ENCODE measurements at regions of chr4 and their contacts with region 1.

Region 1: GRCh38 chr4:54228056-54228527 is 1.0 kb upstream of the PDGFRA start:
- DNase-seq: peak; percentile 91
- H3K4me3 ChIP-seq: peak overlapping the region; percentile 85
- H3K27ac ChIP-seq: peak overlapping the region; percentile 87
- H3K4me1 ChIP-seq: peaks cover 25% of the 10 kb centered on the region
- H3K27me3 ChIP-seq: no peaks in the 10 kb centered on the region

Region 2: GRCh38 chr4:53015681-53016080 is 1212.4 kb before region 1 on chr4:
- in situ Hi-C with region 1: loop called (anchors 10 kb)
- DNase-seq: peak; percentile 70
- H3K4me3 ChIP-seq: no peak overlapping the region
- H3K27ac ChIP-seq: peak overlapping the region; percentile 43
- H3K4me1 ChIP-seq: peaks cover 74% of the 10 kb centered on the region
- H3K27me3 ChIP-seq: no peaks in the 10 kb centered on the region

Region 3: DNA sequence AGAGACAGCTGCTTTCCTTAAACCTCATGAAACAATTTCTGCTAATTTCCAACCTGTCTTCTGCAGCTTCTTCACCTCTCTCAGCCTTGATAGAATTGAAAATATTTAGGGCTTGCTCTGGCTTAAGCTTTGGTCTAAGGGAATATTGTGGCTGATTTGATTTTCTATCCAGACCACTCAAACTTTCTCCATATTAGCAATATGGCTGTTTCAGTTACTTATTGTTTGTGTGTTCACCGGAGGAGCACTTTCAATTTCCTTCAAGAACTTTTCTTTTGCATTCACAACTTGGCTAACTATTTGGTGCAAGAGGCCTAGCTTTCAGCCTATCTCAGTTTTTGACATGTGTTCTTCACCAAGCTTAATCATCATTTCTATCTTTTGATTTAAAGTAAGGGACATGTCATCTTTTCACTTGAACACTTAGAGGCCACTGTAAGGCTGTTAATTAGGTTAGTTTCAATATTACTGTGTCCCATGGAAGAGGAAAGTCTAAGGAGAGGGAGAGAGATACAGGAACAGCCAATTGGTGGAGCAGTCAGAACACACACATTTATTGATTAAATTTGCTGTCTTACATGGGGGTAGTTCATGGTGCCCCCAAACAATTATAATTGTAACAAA is 1152.8 kb before region 1 on chr4:
- in situ Hi-C with region 1: no loop called
- DNase-seq: no peak
- H3K4me3 ChIP-seq: no peak overlapping the region
- H3K27ac ChIP-seq: no peak overlapping the region
- H3K4me1 ChIP-seq: no peaks in the 10 kb centered on the region
- H3K27me3 ChIP-seq: no peaks in the 10 kb centered on the region

Region 4: GRCh38 chr4:53196882-53197771 is 1031.0 kb before region 1 on chr4:
- in situ Hi-C with region 1: loop called (anchors 10 kb)
- DNase-seq: peak; percentile 80
- H3K4me3 ChIP-seq: peak overlapping the region; percentile 65
- H3K27ac ChIP-seq: peak overlapping the region; percentile 37
- H3K4me1 ChIP-seq: peaks cover 62% of the 10 kb centered on the region
- H3K27me3 ChIP-seq: no peaks in the 10 kb centered on the region

Region 5: DNA sequence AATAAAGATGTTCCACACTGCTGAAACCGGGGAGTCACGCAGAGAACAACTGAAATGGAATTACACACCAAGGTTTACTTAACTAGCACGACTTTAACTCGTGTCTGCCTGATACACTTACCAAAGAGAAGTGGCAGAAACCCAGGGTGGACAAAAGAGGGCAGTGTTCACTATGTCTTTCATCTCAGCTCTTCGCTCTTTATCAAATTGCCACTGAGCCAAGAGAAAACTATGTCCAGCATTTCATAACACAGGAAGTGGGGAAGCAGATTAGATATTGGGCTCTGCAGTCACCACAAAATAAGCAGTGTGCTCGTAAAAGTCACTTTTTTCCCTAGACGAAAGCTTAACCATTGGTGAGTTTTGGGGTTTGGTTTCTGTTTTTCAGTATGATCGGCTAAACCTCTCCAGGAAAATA is 319.4 kb before region 1 on chr4:
- in situ Hi-C with region 1: loop called (anchors 10 kb)
- DNase-seq: peak; percentile 89
- H3K4me3 ChIP-seq: peak overlapping the region; percentile 66
- H3K27ac ChIP-seq: peak overlapping the region; percentile 66
- H3K4me1 ChIP-seq: peaks cover 49% of the 10 kb centered on the region
- H3K27me3 ChIP-seq: no peaks in the 10 kb centered on the region

Region 6: GRCh38 chr4:54482529-54483200 is 254.6 kb after region 1 on chr4:
- in situ Hi-C with region 1: no loop called
- DNase-seq: peak; percentile 66
- H3K4me3 ChIP-seq: no peak overlapping the region
- H3K27ac ChIP-seq: no peak overlapping the region
- H3K4me1 ChIP-seq: no peaks in the 10 kb centered on the region
- H3K27me3 ChIP-seq: no peaks in the 10 kb centered on the region

Measured in GM23248 (cell line).